Aorta (tissue), 5 donors: ENCODE measurements at regions of chr10 and their contacts with region 1.

Region 1: GRCh38 chr10:3231951-3232730 is 59.6 kb upstream of the PITRM1 start:
- DNase-seq: peak in 1 of 2 donors; percentile 74
- ATAC-seq: peak; percentile 71
- H3K4me3 ChIP-seq: no peak overlapping the region
- H3K27ac ChIP-seq: peak overlapping the region; percentile 29 to 86
- H3K4me1 ChIP-seq: no peaks in the 10 kb centered on the region
- H3K27me3 ChIP-seq: no peaks in the 10 kb centered on the region

Region 2: DNA sequence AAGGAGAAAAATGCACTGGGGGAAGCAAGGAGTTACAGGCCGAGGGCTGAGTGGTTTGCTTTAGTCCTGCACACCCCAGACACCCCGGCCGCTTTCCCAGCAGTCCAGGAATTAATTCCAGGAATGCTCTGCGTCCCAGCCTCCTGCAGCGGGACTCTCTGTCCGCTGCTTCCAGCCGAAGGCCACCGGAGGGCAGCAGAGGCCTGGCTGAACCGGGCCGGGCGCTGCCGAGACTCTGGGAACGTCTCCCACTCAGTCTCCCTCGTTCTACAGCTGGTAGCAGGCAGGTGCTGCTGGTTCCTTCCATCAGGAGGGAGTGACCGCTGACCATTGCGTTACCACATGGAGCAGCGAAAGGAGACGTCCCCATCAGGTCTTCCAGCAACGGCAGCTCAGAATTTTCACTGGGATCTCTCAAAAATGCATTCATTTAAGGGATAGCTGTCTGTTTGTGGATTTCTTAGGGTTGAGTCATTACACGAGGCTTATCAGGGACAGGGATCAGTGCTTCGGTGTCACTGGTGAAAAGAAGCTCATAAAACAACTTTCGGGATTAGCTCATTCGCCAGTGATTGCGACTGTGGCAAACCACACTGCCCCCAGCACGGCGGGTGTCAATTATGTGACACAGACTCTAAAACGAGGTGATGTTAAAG is 34.7 kb before region 1 on chr10:
- intact Hi-C with region 1: loop called in 1 of 2 experiments (anchors 5 kb)
- DNase-seq: peak; percentile 87 to 94
- ATAC-seq: peak; percentile 94
- H3K4me3 ChIP-seq: no peak overlapping the region
- H3K27ac ChIP-seq: peak overlapping the region in 1 of 2 donors; percentile 22
- H3K4me1 ChIP-seq: no peaks in the 10 kb centered on the region
- H3K27me3 ChIP-seq: no peaks in the 10 kb centered on the region